Pancreas (tissue), 10 donors: ENCODE measurements at regions of chr11 and their contacts with region 1.

Region 1: DNA sequence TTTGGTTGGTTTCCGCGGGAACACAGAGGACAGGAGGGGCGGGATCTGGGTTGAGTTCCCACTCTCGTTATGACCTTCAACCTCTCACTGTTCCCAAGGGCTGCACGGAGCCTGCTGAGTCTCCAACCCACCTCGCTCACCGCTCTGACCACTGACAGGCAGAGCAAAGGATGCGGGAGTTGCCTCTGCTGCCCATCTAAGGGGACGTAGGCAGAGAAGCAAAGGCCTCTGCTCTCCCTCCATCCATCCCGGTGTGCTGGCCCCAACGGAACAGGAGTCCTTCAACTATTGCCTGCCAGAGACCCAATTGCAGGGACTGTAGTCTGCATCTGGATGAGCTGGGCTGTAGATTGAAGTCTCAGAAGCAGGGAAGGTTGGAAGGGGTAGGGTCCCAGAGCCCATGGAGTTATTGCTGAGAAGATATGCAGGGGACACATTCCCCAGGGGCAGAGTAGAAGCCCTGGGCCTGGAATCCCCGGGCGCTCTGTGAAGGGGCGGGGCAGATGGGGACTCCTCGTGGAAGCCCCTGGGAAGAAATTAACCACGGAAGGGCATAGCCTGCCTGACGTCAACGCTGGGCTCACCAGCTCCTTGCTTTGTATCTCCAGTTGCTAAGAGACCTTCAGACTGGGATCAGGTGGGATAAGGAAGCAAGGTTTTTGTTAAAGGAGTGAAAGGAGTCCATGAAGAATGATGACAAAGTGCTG is 12.7 kb upstream of the FXYD2 start:
- DNase-seq: peak in 2 of 6 donors; percentile 17 to 44
- ATAC-seq: no peak
- H3K4me3 ChIP-seq: no peak overlapping the region
- H3K27ac ChIP-seq: no peak overlapping the region
- H3K4me1 ChIP-seq: peaks cover 6 to 16% (median 12%) of the 10 kb centered on the region in 3 donors
- H3K27me3 ChIP-seq: no peaks in the 10 kb centered on the region
- CTCF ChIP-seq: no peak

Region 2: GRCh38 chr11:117796872-117797529 is 40.2 kb before region 1 on chr11 and contains the start of gene DSCAML1:
- intact Hi-C with region 1: no loop called
- DNase-seq: peak in 1 of 6 donors; percentile 79
- ATAC-seq: peak; percentile 55 to 85 (median 82)
- H3K4me3 ChIP-seq: peak within 1 kb of the TSS in 3 of 4 donors; percentile 2 to 41 (median 31)
- H3K27ac ChIP-seq: no peak within 1 kb of the TSS
- H3K4me1 ChIP-seq: peaks cover 6 to 7% (median 7%) of the 10 kb centered on the region in 3 donors
- H3K27me3 ChIP-seq: peaks cover 0 to 7% (median 2%) of the 10 kb centered on the region in 4 donors
- CTCF ChIP-seq: no peak
- total RNA-seq, gene DSCAML1: 0.69 to 2.7 (median 1.8) TPM

Region 3: DNA sequence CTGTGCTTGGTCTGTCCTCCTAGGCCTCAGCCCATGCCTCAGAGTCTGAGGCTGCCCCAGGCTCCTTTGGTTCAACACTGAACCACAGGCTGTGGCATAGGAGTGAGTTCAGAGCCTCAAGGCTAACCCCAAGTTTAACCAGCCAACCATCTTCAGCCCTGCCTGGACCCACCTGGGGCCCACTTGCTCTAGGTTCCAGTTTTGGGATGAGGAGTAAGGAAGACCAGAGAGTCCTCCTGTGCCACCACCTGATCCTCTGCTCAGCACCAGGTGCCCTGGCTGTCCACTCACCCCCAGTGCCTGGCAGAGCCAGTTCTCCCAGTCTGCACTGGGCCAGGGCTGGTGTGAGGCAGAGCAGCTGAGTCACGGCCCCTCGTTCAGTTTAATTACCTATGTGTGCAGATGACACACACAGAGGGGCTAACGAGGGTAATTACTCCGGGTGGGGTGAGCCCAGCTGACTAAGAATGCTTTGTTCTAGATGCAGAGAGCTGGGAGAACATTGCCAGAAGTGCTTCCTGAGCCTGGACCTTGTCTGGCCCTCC is 104.0 kb after region 1 on chr11:
- intact Hi-C with region 1: loop called in 2 of 3 experiments (anchors 5 kb)
- DNase-seq: peak in 1 of 6 donors; percentile 4
- ATAC-seq: no peak
- H3K4me3 ChIP-seq: no peak overlapping the region
- H3K27ac ChIP-seq: no peak overlapping the region
- H3K4me1 ChIP-seq: no peaks in the 10 kb centered on the region
- H3K27me3 ChIP-seq: no peaks in the 10 kb centered on the region
- CTCF ChIP-seq: no peak